GM12878 (cell line): ENCODE measurements at regions of chr2 and their contacts with region 1.

Region 1: GRCh38 chr2:88950010-88950409 is 258.5 kb downstream of the RPIA start:
- DNase-seq: no peak
- ATAC-seq: no peak
- H3K4me3 ChIP-seq: no peak overlapping the region
- H3K27ac ChIP-seq: no peak overlapping the region
- H3K4me1 ChIP-seq: no peaks in the 10 kb centered on the region
- H3K27me3 ChIP-seq: no peaks in the 10 kb centered on the region
- CTCF ChIP-seq: peak; percentile 16 to 20 (median 20); a peak in 3 of 6 replicates
- EP300 ChIP-seq: no peak
- POLR2A ChIP-seq: no peak
- RAD21 ChIP-seq: 0 out of 2 replicates have a peak, but pooled peaks have one; percentile 13

Region 2: DNA sequence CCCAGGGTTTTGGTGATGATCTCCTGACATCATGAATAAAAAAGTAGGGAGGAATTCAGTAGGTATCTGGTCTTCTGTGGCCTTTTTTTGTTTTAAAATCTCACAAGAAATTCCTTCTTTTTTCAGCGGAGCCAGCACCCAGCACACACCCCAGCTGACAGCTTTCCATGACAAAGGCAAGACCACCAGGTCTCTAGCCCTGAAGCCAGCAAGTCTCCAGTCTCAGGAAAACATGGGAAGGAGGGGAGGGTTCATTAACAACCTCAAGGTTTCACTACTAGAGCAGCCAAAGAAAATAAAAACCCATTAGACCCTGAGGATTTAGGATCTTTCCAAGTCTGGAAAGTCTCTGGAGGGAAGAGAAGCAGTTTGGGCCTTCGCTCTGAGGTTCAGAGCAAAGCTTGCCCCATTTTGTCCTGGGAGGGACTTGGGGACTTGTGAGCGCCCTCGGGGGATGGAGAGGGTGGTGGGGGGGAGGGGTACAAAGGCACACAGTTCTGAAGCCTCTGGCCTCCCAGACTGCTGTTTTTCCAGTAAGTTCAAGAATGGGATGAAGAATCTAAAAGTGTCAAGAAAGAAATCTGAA is 506.6 kb before region 1 on chr2:
- CTCF ChIA-PET with region 1: no interaction called
- POLR2A ChIA-PET with region 1: no interaction called
- RAD21 ChIA-PET with region 1: no interaction called
- SMC1A ChIA-PET with region 1: no interaction called
- in situ Hi-C with region 1: no loop called
- intact Hi-C with region 1: no loop called
- DNase-seq: no peak
- ATAC-seq: no peak
- H3K4me3 ChIP-seq: no peak overlapping the region
- H3K27ac ChIP-seq: no peak overlapping the region
- H3K4me1 ChIP-seq: no peaks in the 10 kb centered on the region
- H3K27me3 ChIP-seq: 0 out of 4 replicates have a peak, but pooled peaks cover 0 to 2% of the 10 kb centered on the region in 2 experiments
- CTCF ChIP-seq: no peak
- EP300 ChIP-seq: no peak
- POLR2A ChIP-seq: no peak
- RAD21 ChIP-seq: no peak

Region 3: DNA sequence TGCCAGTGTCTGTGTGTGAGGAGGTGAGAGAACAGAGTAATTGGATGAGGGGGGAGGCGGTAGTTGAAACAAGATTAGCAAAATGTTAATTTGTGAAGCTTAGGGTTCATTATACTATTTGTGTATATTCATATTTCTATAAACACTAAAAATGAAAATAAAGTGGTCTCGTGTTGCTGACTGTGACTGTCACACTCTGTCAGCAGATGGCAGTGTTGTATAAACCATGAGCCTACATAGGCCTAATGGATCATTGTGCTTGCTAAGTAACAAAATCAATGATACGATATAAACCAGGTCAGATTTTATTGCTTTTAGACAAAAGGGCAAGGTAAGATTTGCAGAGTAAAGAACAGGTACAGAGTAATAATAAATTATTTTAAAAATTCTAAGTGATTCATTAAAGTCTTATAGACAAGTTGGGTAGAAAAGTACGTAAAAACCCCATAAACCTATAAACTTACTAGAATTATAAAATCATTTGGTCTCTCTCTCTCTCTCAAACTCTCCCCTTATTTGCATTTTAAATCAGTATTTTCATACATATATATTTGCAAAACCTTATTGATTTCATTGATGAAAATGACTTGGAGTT is 75.8 kb before region 1 on chr2:
- CTCF ChIA-PET with region 1: no interaction called
- POLR2A ChIA-PET with region 1: interaction called, 3 read pairs
- RAD21 ChIA-PET with region 1: no interaction called
- SMC1A ChIA-PET with region 1: no interaction called
- in situ Hi-C with region 1: no loop called
- intact Hi-C with region 1: loop called (anchors 10 kb)
- DNase-seq: no peak
- ATAC-seq: peak; percentile 64
- H3K4me3 ChIP-seq: no peak overlapping the region
- H3K27ac ChIP-seq: no peak overlapping the region
- H3K4me1 ChIP-seq: no peaks in the 10 kb centered on the region
- H3K27me3 ChIP-seq: no peaks in the 10 kb centered on the region
- CTCF ChIP-seq: peak; percentile 40 to 59 (median 53); a peak in 5 of 6 replicates
- EP300 ChIP-seq: no peak
- POLR2A ChIP-seq: no peak
- RAD21 ChIP-seq: peak; percentile 80